HAP-1 (cell line): ENCODE measurements at regions of chrX and their contacts with region 1.

Region 1: GRCh38 chrX:68196939-68197791 is 236.1 kb downstream of the OPHN1 start:
- DNase-seq: peak; percentile 68 to 75
- H3K4me3 ChIP-seq: no peak overlapping the region
- H3K4me1 ChIP-seq: no peaks in the 10 kb centered on the region
- H3K27me3 ChIP-seq: no peaks in the 10 kb centered on the region

Region 2: GRCh38 chrX:68462653-68463052 is 265.5 kb after region 1 on chrX:
- in situ Hi-C with region 1: loop called (anchors 10 kb)
- DNase-seq: peak; percentile 70 to 73
- H3K4me3 ChIP-seq: no peak overlapping the region
- H3K4me1 ChIP-seq: peaks cover 19% of the 10 kb centered on the region
- H3K27me3 ChIP-seq: no peaks in the 10 kb centered on the region

Region 3: GRCh38 chrX:68498508-68499379 is 301.6 kb after region 1 on chrX and contains the start of gene YIPF6:
- in situ Hi-C with region 1: loop called (anchors 10 kb)
- DNase-seq: peak; percentile 77 to 89
- H3K4me3 ChIP-seq: peak within 1 kb of the TSS; percentile 79
- H3K4me1 ChIP-seq: peaks cover 6% of the 10 kb centered on the region
- H3K27me3 ChIP-seq: no peaks in the 10 kb centered on the region; the same call in 1 of the 2 replicates

Region 4: GRCh38 chrX:68710870-68711576 is 513.9 kb after region 1 on chrX:
- in situ Hi-C with region 1: loop called (anchors 5 kb)
- DNase-seq: peak; percentile 25 to 68
- H3K4me3 ChIP-seq: no peak overlapping the region
- H3K4me1 ChIP-seq: no peaks in the 10 kb centered on the region
- H3K27me3 ChIP-seq: no peaks in the 10 kb centered on the region

Region 5: GRCh38 chrX:68822641-68823410 is 625.7 kb after region 1 on chrX:
- in situ Hi-C with region 1: loop called (anchors 25 kb)
- DNase-seq: peak; percentile 85 to 86
- H3K4me3 ChIP-seq: no peak overlapping the region
- H3K4me1 ChIP-seq: peaks cover 7% of the 10 kb centered on the region
- H3K27me3 ChIP-seq: no peaks in the 10 kb centered on the region

Region 6: DNA sequence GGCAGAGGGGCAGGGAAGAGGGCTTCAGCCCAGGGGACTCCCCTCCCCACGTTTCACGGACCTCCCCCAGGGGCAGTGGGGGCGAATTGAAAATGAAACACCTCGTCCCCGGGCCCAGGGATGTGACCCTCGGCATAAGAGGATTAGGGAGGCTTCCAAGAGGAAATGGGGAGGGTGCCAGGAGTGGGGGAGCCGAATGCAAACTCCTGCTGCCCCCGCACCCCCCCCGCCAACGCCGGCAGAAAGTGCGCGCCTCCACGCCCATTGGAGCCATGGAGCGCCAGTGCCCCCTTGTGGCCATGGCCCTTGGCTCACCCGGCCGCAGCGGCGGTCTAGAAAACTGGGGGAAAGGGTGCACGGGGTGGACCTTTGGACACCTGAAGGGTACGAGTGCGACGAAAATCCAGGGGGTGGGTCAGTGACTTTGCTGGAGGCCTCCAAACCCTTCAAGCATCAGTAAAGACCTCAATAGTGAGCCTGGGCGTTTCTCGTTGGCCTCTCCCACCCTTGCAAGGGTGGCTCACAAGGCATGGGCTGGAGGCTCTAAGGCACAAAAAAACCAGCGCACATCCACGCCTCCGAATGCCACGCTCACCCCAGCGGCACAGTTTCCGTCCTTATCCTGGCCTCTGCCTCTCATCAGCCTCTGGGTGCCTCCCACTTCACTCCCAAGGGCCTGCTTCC is 1088.9 kb after region 1 on chrX:
- in situ Hi-C with region 1: loop called (anchors 25 kb)
- DNase-seq: peak; percentile 89 to 96
- H3K4me3 ChIP-seq: peak overlapping the region; percentile 11
- H3K4me1 ChIP-seq: peaks cover 47% of the 10 kb centered on the region
- H3K27me3 ChIP-seq: no peaks in the 10 kb centered on the region

Region 7: GRCh38 chrX:69387567-69388487 is 1190.7 kb after region 1 on chrX:
- in situ Hi-C with region 1: loop called (anchors 25 kb)
- DNase-seq: peak; percentile 75 to 92
- H3K4me3 ChIP-seq: no peak overlapping the region
- H3K4me1 ChIP-seq: peaks cover 6% of the 10 kb centered on the region
- H3K27me3 ChIP-seq: no peaks in the 10 kb centered on the region